Activated T-helper 1 cell treated with anti-CD3 and anti-CD28 coated beads, Interleukin-12 subunit alpha, Interleukin-12 subunit beta, Interleukin-2, Interleukin-4 antibody, amounts not matched to agents 30 ng/mL and 10 ng/mL and 1 ng/mL, durations not matched to agents 14 hours and 24 hours and 36 hours (primary cell): ENCODE measurements at regions of chr11 and their contacts with region 1.

Region 1: GRCh38 chr11:118145285-118146227 is 7.1 kb downstream of the SCN4B start:
- DNase-seq: peak; percentile 86
- H3K4me3 Mint-ChIP-seq: peak overlapping the region; percentile 87
- H3K27ac Mint-ChIP-seq: peak overlapping the region; percentile 70
- H3K4me1 Mint-ChIP-seq: peaks cover 17% of the 10 kb centered on the region
- H3K27me3 Mint-ChIP-seq: peaks cover 48% of the 10 kb centered on the region

Region 2: GRCh38 chr11:118171269-118172062 is 25.9 kb after region 1 on chr11:
- intact Hi-C with region 1: loop called (anchors 1 kb)
- DNase-seq: peak; percentile 63
- H3K4me3 Mint-ChIP-seq: no peak overlapping the region
- H3K27ac Mint-ChIP-seq: no peak overlapping the region
- H3K4me1 Mint-ChIP-seq: peaks cover 5% of the 10 kb centered on the region
- H3K27me3 Mint-ChIP-seq: peaks cover 34% of the 10 kb centered on the region

Region 3: DNA sequence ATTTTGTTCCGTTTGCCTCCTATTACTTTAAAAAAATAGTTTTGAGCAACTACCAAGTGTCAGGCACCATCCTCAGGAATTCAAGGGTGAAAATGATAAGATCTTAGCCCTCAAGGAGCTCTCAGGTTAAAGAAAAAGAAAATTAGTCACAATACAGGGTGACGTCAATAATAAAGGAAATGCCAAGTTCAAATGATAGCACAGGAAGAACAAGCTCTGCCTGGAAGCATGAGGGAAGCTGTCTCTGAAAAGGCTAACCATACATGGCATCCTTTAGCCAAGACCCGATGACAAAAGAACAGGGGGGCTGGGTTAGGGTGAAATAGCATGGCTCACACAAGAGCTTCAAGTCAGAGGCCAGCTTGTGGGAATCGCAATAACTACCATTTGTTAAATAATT is 129.6 kb after region 1 on chr11:
- intact Hi-C with region 1: no loop called
- DNase-seq: no peak
- H3K4me3 Mint-ChIP-seq: no peak overlapping the region
- H3K27ac Mint-ChIP-seq: no peak overlapping the region
- H3K4me1 Mint-ChIP-seq: peaks cover 39% of the 10 kb centered on the region
- H3K27me3 Mint-ChIP-seq: no peaks in the 10 kb centered on the region

Region 4: DNA sequence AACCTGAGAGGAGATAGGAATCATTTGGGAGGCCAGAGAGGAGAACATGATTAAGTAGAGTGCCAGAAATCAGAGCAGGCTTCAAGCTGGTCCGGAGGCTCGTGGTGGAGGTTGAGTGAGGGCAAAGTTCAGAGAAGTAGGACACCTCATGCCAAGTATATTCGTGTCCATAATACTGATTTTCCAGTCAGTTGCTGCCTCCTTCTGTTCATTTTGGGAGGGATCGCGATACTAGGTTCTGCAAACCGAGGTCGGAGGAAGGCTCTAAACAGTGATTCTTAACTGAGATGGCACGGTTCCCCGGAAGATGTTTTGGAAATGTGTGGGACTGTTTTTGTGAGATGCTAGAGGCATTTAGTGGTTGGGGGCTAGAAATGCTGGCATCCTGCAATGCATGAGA is 145.4 kb after region 1 on chr11:
- intact Hi-C with region 1: loop called (anchors 1 kb)
- DNase-seq: peak; percentile 40
- H3K4me3 Mint-ChIP-seq: no peak overlapping the region
- H3K27ac Mint-ChIP-seq: peak overlapping the region; percentile 15
- H3K4me1 Mint-ChIP-seq: peaks cover 29% of the 10 kb centered on the region
- H3K27me3 Mint-ChIP-seq: peaks cover 2% of the 10 kb centered on the region

Region 5: DNA sequence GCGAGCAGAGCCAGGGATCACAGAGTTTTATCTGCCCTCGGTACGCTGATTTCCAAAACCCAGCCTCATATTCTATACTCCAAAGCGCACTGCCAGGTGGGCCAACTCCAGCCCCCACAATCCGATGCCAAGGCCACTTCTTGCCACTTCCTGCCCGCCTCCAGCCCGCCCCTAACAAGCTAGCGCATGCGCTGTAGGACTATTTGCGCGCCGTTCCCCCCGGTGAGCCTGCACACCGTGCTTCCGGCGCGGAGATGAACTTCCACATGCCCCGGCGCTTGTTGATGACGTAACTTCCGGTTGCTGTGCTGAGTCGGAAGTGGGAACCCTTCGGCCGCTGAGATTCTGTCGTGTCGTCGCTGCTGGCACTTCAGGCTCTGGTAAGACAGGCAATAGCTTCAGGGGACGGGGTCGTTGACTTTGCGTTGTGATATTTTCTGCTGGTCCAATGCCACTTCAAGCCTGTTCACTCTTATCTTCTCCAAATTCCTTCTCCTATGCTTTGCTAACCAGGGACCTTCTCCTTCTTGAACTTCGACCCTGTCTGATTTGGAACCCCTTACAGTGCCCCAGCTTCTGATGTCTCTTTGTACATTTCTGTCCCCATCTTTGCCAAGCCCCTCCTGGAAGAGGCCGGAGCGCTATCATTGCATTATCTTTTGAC is 213.9 kb after region 1 on chr11 and contains the start of gene UBE4A:
- intact Hi-C with region 1: loop called (anchors 2 kb)
- DNase-seq: peak; percentile 94
- H3K4me3 Mint-ChIP-seq: peak within 1 kb of the TSS; percentile 95
- H3K27ac Mint-ChIP-seq: peak within 1 kb of the TSS; percentile 89
- H3K4me1 Mint-ChIP-seq: peaks cover 39% of the 10 kb centered on the region
- H3K27me3 Mint-ChIP-seq: no peaks in the 10 kb centered on the region
- total RNA-seq, gene UBE4A: 44.1 and 46.0 TPM in 2 replicates

Region 6: DNA sequence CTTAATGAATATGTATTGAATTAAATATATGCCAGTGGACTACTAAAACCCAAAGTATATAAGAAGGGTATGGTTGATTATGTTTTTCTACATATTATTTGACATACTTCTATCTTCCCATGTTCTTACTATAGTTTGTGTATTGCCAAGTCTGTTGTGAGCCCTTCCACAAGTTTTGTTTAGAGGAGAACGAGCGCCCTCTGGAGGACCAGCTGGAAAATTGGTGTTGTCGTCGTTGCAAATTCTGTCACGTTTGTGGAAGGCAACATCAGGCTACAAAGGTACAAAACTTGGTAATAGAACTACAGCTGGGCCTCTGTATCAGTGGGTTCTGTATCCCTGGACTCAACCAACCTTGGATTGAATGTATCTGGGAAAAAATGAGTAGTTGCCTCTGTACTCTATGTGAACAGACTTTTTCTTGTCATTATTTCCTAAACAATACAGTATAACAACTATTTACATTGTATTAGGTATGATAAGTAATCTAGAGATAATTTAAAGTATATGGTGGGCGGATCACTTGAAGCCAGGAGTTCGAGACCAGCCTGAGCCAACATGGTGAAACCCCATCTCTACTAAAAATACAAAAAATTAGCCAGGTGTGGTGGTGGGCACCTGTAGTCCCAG is 343.0 kb after region 1 on chr11:
- intact Hi-C with region 1: loop called (anchors 1 kb)
- DNase-seq: peak; percentile 64
- H3K4me3 Mint-ChIP-seq: no peak overlapping the region
- H3K27ac Mint-ChIP-seq: no peak overlapping the region
- H3K4me1 Mint-ChIP-seq: peaks cover 7% of the 10 kb centered on the region
- H3K27me3 Mint-ChIP-seq: no peaks in the 10 kb centered on the region

Region 7: GRCh38 chr11:118610804-118611795 is 465.5 kb after region 1 on chr11:
- intact Hi-C with region 1: loop called (anchors 2 kb)
- DNase-seq: peak; percentile 73
- H3K4me3 Mint-ChIP-seq: peak overlapping the region; percentile 50
- H3K27ac Mint-ChIP-seq: no peak overlapping the region
- H3K4me1 Mint-ChIP-seq: peaks cover 23% of the 10 kb centered on the region
- H3K27me3 Mint-ChIP-seq: peaks cover 23% of the 10 kb centered on the region